Caco-2 (cell line): ENCODE measurements at regions of chr1 and their contacts with region 1.

Region 1: GRCh38 chr1:53182111-53182593 is 14.5 kb upstream of the CPT2 start:
- DNase-seq: peak; percentile 71 to 77
- H3K4me3 ChIP-seq: no peak overlapping the region
- H3K4me3 Mint-ChIP-seq: no peak overlapping the region
- H3K27ac Mint-ChIP-seq: no peak overlapping the region
- H3K4me1 ChIP-seq: peaks cover 33% of the 10 kb centered on the region
- H3K4me1 Mint-ChIP-seq: no peaks in the 10 kb centered on the region
- H3K27me3 ChIP-seq: no peaks in the 10 kb centered on the region
- H3K27me3 Mint-ChIP-seq: no peaks in the 10 kb centered on the region
- CTCF ChIP-seq: peak; percentile 49 to 64

Region 2: GRCh38 chr1:52702886-52703787 is 479.0 kb before region 1 on chr1:
- CTCF ChIA-PET with region 1: interaction called, 3 read pairs
- POLR2A ChIA-PET with region 1: no interaction called
- intact Hi-C with region 1: loop called (anchors 5 kb)
- DNase-seq: peak; percentile 81 to 88
- H3K4me3 ChIP-seq: peak overlapping the region; percentile 41
- H3K4me3 Mint-ChIP-seq: peak overlapping the region; percentile 80
- H3K27ac Mint-ChIP-seq: peak overlapping the region; percentile 86
- H3K4me1 ChIP-seq: peaks cover 30% of the 10 kb centered on the region
- H3K4me1 Mint-ChIP-seq: peaks cover 21% of the 10 kb centered on the region
- H3K27me3 ChIP-seq: no peaks in the 10 kb centered on the region
- H3K27me3 Mint-ChIP-seq: no peaks in the 10 kb centered on the region
- CTCF ChIP-seq: no peak

Region 3: GRCh38 chr1:52842643-52843309 is 339.4 kb before region 1 on chr1 and contains the start of gene ZYG11A:
- CTCF ChIA-PET with region 1: no interaction called
- POLR2A ChIA-PET with region 1: no interaction called
- intact Hi-C with region 1: loop called (anchors 1 kb)
- DNase-seq: peak; percentile 81 to 88
- H3K4me3 ChIP-seq: peak within 1 kb of the TSS; percentile 35
- H3K4me3 Mint-ChIP-seq: peak within 1 kb of the TSS; percentile 66
- H3K27ac Mint-ChIP-seq: no peak within 1 kb of the TSS
- H3K4me1 ChIP-seq: peaks cover 3% of the 10 kb centered on the region; the same call in 1 of the 2 replicates
- H3K4me1 Mint-ChIP-seq: no peaks in the 10 kb centered on the region
- H3K27me3 ChIP-seq: no peaks in the 10 kb centered on the region
- H3K27me3 Mint-ChIP-seq: no peaks in the 10 kb centered on the region
- CTCF ChIP-seq: peak; percentile 17 to 28
- total RNA-seq, gene ZYG11A: 2.3 and 2.4 TPM in 2 replicates

Region 4: GRCh38 chr1:52927212-52928014 is 254.7 kb before region 1 on chr1 and contains the start of gene SCP2:
- CTCF ChIA-PET with region 1: interaction called, 6 read pairs
- POLR2A ChIA-PET with region 1: no interaction called
- intact Hi-C with region 1: loop called (anchors 5 kb)
- DNase-seq: peak; percentile 77 to 80
- H3K4me3 ChIP-seq: peak within 1 kb of the TSS; percentile 53
- H3K4me3 Mint-ChIP-seq: peak within 1 kb of the TSS; percentile 86
- H3K27ac Mint-ChIP-seq: peak within 1 kb of the TSS; percentile 30
- H3K4me1 ChIP-seq: no peaks in the 10 kb centered on the region
- H3K4me1 Mint-ChIP-seq: no peaks in the 10 kb centered on the region
- H3K27me3 ChIP-seq: no peaks in the 10 kb centered on the region
- H3K27me3 Mint-ChIP-seq: no peaks in the 10 kb centered on the region
- CTCF ChIP-seq: no peak
- total RNA-seq, gene SCP2: 67.0 and 74.5 TPM in 2 replicates

Region 5: GRCh38 chr1:53069663-53070327 is 112.4 kb before region 1 on chr1:
- CTCF ChIA-PET with region 1: no interaction called
- POLR2A ChIA-PET with region 1: no interaction called
- intact Hi-C with region 1: loop called (anchors 5 kb)
- DNase-seq: no peak
- H3K4me3 ChIP-seq: no peak overlapping the region
- H3K4me3 Mint-ChIP-seq: no peak overlapping the region
- H3K27ac Mint-ChIP-seq: no peak overlapping the region
- H3K4me1 ChIP-seq: no peaks in the 10 kb centered on the region
- H3K4me1 Mint-ChIP-seq: no peaks in the 10 kb centered on the region
- H3K27me3 ChIP-seq: no peaks in the 10 kb centered on the region
- H3K27me3 Mint-ChIP-seq: no peaks in the 10 kb centered on the region
- CTCF ChIP-seq: no peak

Region 6: DNA sequence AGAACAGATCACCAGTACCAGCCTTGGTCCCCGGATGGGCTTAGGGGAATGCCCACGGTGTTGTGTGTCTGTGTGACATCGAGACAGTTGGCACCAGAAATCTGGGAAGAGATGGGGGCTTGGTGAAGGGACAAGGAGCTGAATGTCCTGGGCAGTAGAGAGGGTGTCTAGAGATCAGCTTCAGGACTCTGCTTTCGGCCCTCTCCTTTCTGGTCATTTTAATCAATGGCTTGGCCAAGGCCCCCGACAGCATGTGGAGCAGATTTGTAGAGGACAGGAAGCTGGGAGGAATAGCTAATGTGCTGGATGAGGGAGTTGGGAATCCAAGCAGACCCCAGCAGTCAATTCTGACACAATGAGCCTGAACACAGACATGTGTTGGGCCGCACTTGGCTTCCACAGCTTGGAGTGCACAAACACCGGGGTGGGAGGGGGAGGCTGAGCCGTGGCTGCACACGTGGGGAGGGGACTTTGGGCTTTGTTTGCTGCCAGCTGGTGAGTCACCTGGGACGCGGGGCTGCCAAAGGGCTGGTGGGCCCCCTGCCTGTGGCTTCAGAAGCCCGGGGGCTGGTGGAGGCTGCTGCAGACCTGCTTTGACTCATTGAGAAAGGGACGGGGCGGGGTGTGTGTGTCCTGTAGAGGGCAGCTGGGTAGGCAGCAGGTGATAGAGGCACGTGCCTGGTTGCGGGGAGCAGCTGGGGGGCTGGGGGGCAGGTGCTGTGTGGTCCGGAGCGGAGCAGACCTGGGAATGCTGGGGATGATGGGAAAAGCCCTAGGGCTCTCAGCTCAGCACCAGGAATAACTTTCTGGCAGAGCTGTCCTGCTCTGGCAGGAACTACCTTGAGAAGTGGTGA is 60.6 kb before region 1 on chr1:
- CTCF ChIA-PET with region 1: no interaction called
- POLR2A ChIA-PET with region 1: no interaction called
- intact Hi-C with region 1: loop called (anchors 5 kb)
- DNase-seq: peak; percentile 34 to 47
- H3K4me3 ChIP-seq: no peak overlapping the region
- H3K4me3 Mint-ChIP-seq: no peak overlapping the region
- H3K27ac Mint-ChIP-seq: no peak overlapping the region
- H3K4me1 ChIP-seq: peaks cover 29% of the 10 kb centered on the region
- H3K4me1 Mint-ChIP-seq: peaks cover 14% of the 10 kb centered on the region
- H3K27me3 ChIP-seq: no peaks in the 10 kb centered on the region
- H3K27me3 Mint-ChIP-seq: no peaks in the 10 kb centered on the region
- CTCF ChIP-seq: peak in 1 of 2 experiments; percentile 17

Region 7: GRCh38 chr1:53196485-53197270 is 14.5 kb after region 1 on chr1 and contains the start of gene CPT2:
- CTCF ChIA-PET with region 1: interaction called, 4 read pairs
- POLR2A ChIA-PET with region 1: no interaction called
- intact Hi-C with region 1: loop called (anchors 2 kb)
- DNase-seq: peak; percentile 90
- H3K4me3 ChIP-seq: peak within 1 kb of the TSS; percentile 83
- H3K4me3 Mint-ChIP-seq: peak within 1 kb of the TSS; percentile 99
- H3K27ac Mint-ChIP-seq: peak within 1 kb of the TSS; percentile 98
- H3K4me1 ChIP-seq: 0 out of 2 replicates have a peak, but pooled peaks cover 3% of the 10 kb centered on the region
- H3K4me1 Mint-ChIP-seq: peaks cover 21% of the 10 kb centered on the region
- H3K27me3 ChIP-seq: no peaks in the 10 kb centered on the region
- H3K27me3 Mint-ChIP-seq: no peaks in the 10 kb centered on the region
- CTCF ChIP-seq: no peak
- total RNA-seq, gene CPT2: 12.5 and 14.4 TPM in 2 replicates

Region 8: GRCh38 chr1:53249706-53250105 is 67.6 kb after region 1 on chr1:
- CTCF ChIA-PET with region 1: no interaction called
- POLR2A ChIA-PET with region 1: no interaction called
- intact Hi-C with region 1: no loop called
- DNase-seq: no peak
- H3K4me3 ChIP-seq: no peak overlapping the region
- H3K4me3 Mint-ChIP-seq: no peak overlapping the region
- H3K27ac Mint-ChIP-seq: no peak overlapping the region
- H3K4me1 ChIP-seq: 0 out of 2 replicates have a peak, but pooled peaks cover 3% of the 10 kb centered on the region
- H3K4me1 Mint-ChIP-seq: peaks cover 10% of the 10 kb centered on the region
- H3K27me3 ChIP-seq: no peaks in the 10 kb centered on the region
- H3K27me3 Mint-ChIP-seq: no peaks in the 10 kb centered on the region
- CTCF ChIP-seq: no peak